Endothelial cell of umbilical vein (primary cell): ENCODE measurements at regions of chr3 and their contacts with region 1.

Region 1: DNA sequence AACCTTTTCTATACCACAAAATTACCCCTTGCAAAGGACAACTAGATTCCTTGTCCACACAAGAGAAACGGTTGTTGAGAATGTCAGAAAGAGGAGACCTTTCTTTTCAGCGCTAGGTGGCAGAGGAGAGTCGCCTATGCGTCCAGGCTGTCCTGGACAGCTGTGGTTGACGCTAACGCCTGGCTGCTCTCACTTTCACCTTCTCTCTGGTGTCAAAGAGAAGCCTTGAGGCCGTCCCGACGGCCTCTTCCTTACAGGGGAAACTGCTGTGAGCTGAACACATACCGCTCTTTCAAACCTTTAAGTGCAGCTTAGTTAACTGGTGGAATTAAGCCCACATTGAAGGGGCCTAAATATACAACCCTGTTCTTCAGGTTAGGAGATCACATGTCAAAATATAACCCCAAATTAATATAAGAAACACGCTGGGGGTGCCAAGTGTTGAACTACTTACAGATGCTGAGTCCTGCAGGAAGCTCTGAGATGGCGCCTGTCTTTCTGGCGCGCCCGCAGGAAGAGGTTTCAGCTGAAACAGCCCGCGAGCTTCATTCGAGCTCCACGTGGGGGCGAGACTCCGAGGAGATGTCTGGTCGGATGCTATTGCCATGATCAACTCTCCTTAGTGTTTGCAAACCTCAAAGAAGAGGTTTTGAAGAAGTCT is 26.1 kb upstream of the KBTBD8 start:
- DNase-seq: peak; percentile 77
- H3K4me3 ChIP-seq: peak overlapping the region in 2 of 3 experiments; percentile 1 to 46
- H3K27ac ChIP-seq: no peak overlapping the region
- H3K4me1 ChIP-seq: peaks cover 6% of the 10 kb centered on the region
- H3K27me3 ChIP-seq: peaks cover 2 to 4% of the 10 kb centered on the region in 2 experiments
- CTCF ChIP-seq: peak; percentile 82 to 89
- POLR2A ChIP-seq: no peak

Region 2: GRCh38 chr3:66938338-66938963 is 33.6 kb before region 1 on chr3:
- CTCF ChIA-PET with region 1: interaction called, 20 read pairs
- POLR2A ChIA-PET with region 1: no interaction called
- dilution Hi-C with region 1: no loop called
- intact Hi-C with region 1: no loop called
- DNase-seq: peak; percentile 61
- H3K4me3 ChIP-seq: no peak overlapping the region
- H3K27ac ChIP-seq: no peak overlapping the region
- H3K4me1 ChIP-seq: no peaks in the 10 kb centered on the region
- H3K27me3 ChIP-seq: peaks cover 0 to 2% of the 10 kb centered on the region in 2 experiments
- CTCF ChIP-seq: peak; percentile 58 to 66
- POLR2A ChIP-seq: no peak

Region 3: DNA sequence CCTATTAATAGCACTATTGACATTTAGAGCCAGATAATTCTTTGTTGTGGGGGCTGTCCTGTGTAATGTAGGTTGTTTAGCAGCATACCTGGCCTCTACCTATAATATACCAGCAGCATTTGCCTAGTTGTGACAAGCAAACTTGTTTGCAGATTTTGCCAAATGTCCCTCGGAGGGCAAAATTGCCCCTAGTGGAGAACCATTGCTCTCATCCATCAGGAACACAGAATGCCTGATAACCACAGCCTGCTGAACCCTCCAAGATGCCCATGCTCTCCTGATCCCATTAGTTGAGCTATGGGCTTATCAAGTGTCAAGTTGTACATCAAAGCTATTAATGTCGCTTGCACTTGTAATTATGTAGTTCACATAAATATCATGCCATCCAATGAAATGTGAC is 11.1 kb after region 1 on chr3:
- CTCF ChIA-PET with region 1: interaction called, 13 read pairs
- POLR2A ChIA-PET with region 1: no interaction called
- dilution Hi-C with region 1: no loop called
- intact Hi-C with region 1: no loop called
- DNase-seq: no peak
- H3K4me3 ChIP-seq: no peak overlapping the region
- H3K27ac ChIP-seq: no peak overlapping the region
- H3K4me1 ChIP-seq: no peaks in the 10 kb centered on the region
- H3K27me3 ChIP-seq: peaks cover 2 to 3% of the 10 kb centered on the region in 2 experiments
- CTCF ChIP-seq: no peak
- POLR2A ChIP-seq: no peak

Region 4: GRCh38 chr3:66998113-66998903 is 26.3 kb after region 1 on chr3 and contains the start of gene KBTBD8:
- CTCF ChIA-PET with region 1: interaction called, 18 read pairs
- POLR2A ChIA-PET with region 1: interaction called, 3 read pairs
- dilution Hi-C with region 1: no loop called
- intact Hi-C with region 1: loop called (anchors 1 kb)
- DNase-seq: peak; percentile 99
- H3K4me3 ChIP-seq: peak within 1 kb of the TSS; percentile 76 to 93 (median 82)
- H3K27ac ChIP-seq: peak within 1 kb of the TSS; percentile 35
- H3K4me1 ChIP-seq: peaks cover 17% of the 10 kb centered on the region
- H3K27me3 ChIP-seq: peaks cover 0 to 15% of the 10 kb centered on the region in 2 experiments
- CTCF ChIP-seq: no peak
- POLR2A ChIP-seq: peak; percentile 45
- total RNA-seq, gene KBTBD8: 1.1 and 3.2 TPM in 2 replicates

Region 5: GRCh38 chr3:67357610-67358458 is 385.8 kb after region 1 on chr3:
- CTCF ChIA-PET with region 1: interaction called, 8 read pairs
- POLR2A ChIA-PET with region 1: no interaction called
- dilution Hi-C with region 1: no loop called
- intact Hi-C with region 1: loop called (anchors 5 kb)
- DNase-seq: peak; percentile 26
- H3K4me3 ChIP-seq: no peak overlapping the region
- H3K27ac ChIP-seq: no peak overlapping the region
- H3K4me1 ChIP-seq: no peaks in the 10 kb centered on the region
- H3K27me3 ChIP-seq: no peaks in the 10 kb centered on the region
- CTCF ChIP-seq: peak; percentile 15 to 36
- POLR2A ChIP-seq: no peak

Region 6: GRCh38 chr3:68876112-68876713 is 1904.2 kb after region 1 on chr3:
- CTCF ChIA-PET with region 1: interaction called, 107 read pairs
- POLR2A ChIA-PET with region 1: no interaction called
- dilution Hi-C with region 1: no loop called
- intact Hi-C with region 1: loop called (anchors 1 kb)
- DNase-seq: peak; percentile 73
- H3K4me3 ChIP-seq: no peak overlapping the region
- H3K27ac ChIP-seq: no peak overlapping the region
- H3K4me1 ChIP-seq: no peaks in the 10 kb centered on the region
- H3K27me3 ChIP-seq: peaks cover 3 to 4% of the 10 kb centered on the region in 2 experiments
- CTCF ChIP-seq: peak; percentile 55 to 71
- POLR2A ChIP-seq: no peak